ENCODE measurements at regions of chr3 and their contacts with region 1.

Region 1: GRCh38 chr3:53045518-53046170 is at the start of gene SFMBT1:
- DNase-seq: peak; percentile 60
- H3K4me3 Mint-ChIP-seq: peak within 1 kb of the TSS; percentile 95
- H3K27ac Mint-ChIP-seq: peak within 1 kb of the TSS; percentile 91
- H3K4me1 Mint-ChIP-seq: peaks cover 38% of the 10 kb centered on the region
- H3K27me3 Mint-ChIP-seq: peaks cover 22% of the 10 kb centered on the region
- total RNA-seq, gene SFMBT1: 28.4 and 31.0 TPM in 2 replicates

Region 2: DNA sequence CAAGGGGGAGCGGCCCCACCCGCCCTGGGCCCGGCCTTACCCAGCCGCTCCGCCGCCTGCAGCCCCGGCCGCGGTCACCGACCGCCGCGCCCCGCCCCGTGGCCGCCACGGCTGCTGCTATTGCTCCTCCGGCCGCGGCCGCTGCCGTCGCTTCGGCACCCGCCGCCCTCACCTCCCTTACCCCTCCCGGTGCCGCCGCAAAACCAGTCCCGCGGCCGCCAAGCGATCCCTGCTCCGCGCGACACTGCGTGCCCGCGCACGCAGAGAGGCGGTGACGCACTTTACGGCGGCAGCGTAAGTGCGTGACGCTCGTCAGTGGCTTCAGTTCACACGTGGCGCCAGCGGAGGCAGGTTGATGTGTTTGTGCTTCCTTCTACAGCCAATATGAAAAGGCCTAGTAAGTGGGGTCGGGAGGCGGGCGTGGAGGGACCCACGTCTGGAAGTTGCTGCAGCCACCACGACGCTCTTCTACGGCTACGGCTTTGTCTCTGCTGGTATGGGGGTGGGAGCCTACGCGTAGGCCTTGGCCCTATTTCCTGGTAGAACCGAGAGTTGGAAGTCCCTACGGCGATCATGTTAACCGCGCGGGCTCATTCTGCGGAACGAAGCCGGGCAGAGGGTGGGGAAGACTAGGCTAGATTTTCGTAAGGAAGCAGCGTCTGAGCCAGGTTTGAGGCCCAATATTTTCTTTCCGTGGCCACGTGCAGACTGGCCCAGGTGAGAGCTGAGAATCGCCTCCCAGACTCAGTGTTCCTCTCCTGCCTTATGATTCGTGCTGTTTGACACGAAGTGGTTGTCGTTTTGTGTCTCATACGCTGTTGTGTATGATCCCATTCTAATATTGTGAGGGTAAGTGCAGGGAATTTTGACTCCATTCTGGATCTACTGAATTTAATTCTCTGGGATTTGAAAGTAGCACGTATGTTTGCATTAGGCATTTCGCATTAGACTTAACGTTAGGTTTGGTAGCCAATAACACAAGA is 359.6 kb before region 1 on chr3 and contains the starts of genes GNL3 and PBRM1:
- intact Hi-C with region 1: loop called (anchors 1 kb)
- DNase-seq: peak; percentile 93
- H3K4me3 Mint-ChIP-seq: peak within 1 kb of the TSS; percentile 98
- H3K27ac Mint-ChIP-seq: peak within 1 kb of the TSS; percentile 99
- H3K4me1 Mint-ChIP-seq: peaks cover 75% of the 10 kb centered on the region
- H3K27me3 Mint-ChIP-seq: no peaks in the 10 kb centered on the region
- total RNA-seq, gene GNL3: 241 and 245 TPM in 2 replicates
- total RNA-seq, gene PBRM1: 68.6 and 68.8 TPM in 2 replicates

Region 3: DNA sequence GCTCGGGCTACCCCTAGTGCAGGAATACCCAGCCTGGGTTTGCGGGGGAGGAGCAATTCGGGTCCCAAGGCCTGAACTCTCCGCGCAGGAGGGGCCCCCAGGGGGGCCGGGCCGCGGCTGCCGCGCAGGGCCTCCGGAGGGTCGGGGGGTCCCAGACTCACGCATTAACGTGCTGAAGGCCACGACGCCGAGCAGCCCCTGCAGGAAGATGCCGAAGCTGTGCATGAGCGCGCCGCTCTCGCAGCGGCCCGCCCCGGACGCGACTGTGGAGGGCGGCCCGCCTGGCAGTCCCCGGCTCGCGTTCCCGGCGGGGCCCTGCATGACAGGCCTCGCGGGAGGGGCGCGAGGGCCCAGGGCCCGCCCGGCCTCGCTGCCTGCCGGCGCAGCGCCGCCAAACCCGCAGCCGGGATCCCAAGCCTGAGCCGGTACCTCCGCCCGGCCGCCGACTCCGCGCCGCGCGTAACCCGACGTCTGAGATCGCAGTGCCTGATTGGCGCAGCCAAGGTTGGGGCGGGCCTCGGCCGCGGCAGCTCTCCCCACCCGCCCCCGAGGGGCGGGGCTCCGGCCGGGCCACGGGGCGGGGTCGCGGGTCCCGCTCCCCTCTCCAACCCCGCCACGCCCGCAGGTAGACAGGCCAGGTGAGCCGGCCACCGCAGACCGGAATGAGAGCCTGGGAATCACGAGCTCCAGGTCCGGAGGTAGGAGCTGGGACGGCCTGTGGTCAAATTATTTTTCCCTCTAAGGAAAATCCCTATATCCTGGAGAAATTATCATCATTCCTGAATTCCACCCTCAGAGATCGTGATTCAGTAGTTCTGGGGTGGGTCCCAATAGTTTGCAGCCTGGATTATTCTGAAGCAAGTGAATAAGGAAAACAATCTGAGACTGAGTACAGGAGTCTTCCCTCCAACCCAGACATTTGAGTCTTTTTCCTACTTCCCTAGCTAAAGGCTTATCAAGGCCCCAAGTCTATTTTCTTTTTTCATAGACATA is 148.2 kb before region 1 on chr3 and contains the start of gene STIMATE:
- intact Hi-C with region 1: loop called (anchors 1 kb)
- DNase-seq: peak; percentile 87
- H3K4me3 Mint-ChIP-seq: peak within 1 kb of the TSS; percentile 97
- H3K27ac Mint-ChIP-seq: peak within 1 kb of the TSS; percentile 77
- H3K4me1 Mint-ChIP-seq: peaks cover 49% of the 10 kb centered on the region
- H3K27me3 Mint-ChIP-seq: no peaks in the 10 kb centered on the region
- total RNA-seq, gene STIMATE: 19.8 and 20.1 TPM in 2 replicates

Region 4: GRCh38 chr3:52983336-52983807 is 62.3 kb before region 1 on chr3:
- intact Hi-C with region 1: loop called (anchors 1 kb)
- DNase-seq: peak; percentile 64
- H3K4me3 Mint-ChIP-seq: peak overlapping the region; percentile 38
- H3K27ac Mint-ChIP-seq: peak overlapping the region; percentile 85
- H3K4me1 Mint-ChIP-seq: peaks cover 23% of the 10 kb centered on the region
- H3K27me3 Mint-ChIP-seq: no peaks in the 10 kb centered on the region

Region 5: DNA sequence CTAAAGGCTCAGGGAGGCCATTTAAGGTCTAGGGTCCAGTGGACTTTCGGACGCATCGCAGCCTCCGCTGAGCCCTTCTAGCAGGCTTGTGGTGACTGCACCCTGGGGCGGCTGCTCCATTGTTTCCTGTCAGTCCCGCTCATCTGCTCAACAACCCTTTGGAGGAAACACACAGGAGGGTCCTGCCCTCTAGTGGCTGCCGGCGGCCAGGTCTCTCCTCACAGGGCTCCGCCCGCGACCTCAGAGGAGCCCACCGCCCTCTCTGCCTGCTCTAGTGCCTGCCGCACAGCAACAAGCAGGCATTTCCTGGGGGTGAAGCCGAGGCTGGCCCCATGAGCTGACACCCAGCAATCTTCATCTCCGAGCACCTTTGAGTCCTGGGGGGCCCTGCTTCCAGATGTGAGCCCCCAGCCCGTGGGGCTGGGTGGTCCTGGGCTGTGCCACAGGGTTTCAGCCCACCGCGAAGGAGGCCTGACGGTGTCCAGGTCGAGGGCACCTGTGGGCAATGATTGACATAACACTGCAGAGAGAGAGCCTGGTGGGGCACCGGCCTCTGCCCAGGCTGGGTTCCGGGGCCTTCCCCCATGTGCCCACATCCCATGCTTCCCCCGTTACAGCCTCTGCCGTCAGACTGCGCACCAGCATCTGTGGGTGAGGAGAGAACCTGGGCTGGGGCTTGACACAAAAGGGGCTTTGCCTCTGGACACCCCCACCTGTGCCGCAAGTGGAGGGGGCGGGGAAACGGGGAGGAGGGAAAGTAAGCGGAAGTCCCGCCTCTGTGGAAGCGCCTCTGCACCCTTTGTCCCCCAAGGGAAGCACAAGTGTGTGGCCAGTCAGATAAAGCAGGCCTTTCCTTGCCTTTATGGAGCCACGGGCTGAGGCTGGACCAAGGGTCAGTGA is 27.3 kb after region 1 on chr3:
- intact Hi-C with region 1: loop called (anchors 1 kb)
- DNase-seq: peak; percentile 85
- H3K4me3 Mint-ChIP-seq: peak overlapping the region; percentile 89
- H3K27ac Mint-ChIP-seq: peak overlapping the region; percentile 95
- H3K4me1 Mint-ChIP-seq: peaks cover 19% of the 10 kb centered on the region
- H3K27me3 Mint-ChIP-seq: peaks cover 2% of the 10 kb centered on the region

Region 6: GRCh38 chr3:53255775-53256703 is 210.4 kb after region 1 on chr3 and contains the start of gene TKT:
- intact Hi-C with region 1: loop called (anchors 10 kb)
- DNase-seq: peak; percentile 79
- H3K4me3 Mint-ChIP-seq: peak within 1 kb of the TSS; percentile 95
- H3K27ac Mint-ChIP-seq: peak within 1 kb of the TSS; percentile 90
- H3K4me1 Mint-ChIP-seq: peaks cover 36% of the 10 kb centered on the region
- H3K27me3 Mint-ChIP-seq: peaks cover 8% of the 10 kb centered on the region
- total RNA-seq, gene TKT: 332 and 351 TPM in 2 replicates

Measured in activated T-helper 1 cell treated with anti-CD3 and anti-CD28 coated beads, Interleukin-12 subunit alpha, Interleukin-12 subunit beta, Interleukin-2, Interleukin-4 antibody, amounts not matched to agents 30 ng/mL and 10 ng/mL and 1 ng/mL, durations not matched to agents 14 hours and 24 hours and 36 hours (primary cell).